GM12878 (cell line): ENCODE measurements at regions of chr7 and their contacts with region 1.

Region 1: GRCh38 chr7:13042612-13043240 is 355.3 kb downstream of the ARL4A start:
- DNase-seq: no peak
- ATAC-seq: no peak
- H3K4me3 ChIP-seq: no peak overlapping the region
- H3K27ac ChIP-seq: no peak overlapping the region
- H3K4me1 ChIP-seq: no peaks in the 10 kb centered on the region
- H3K27me3 ChIP-seq: no peaks in the 10 kb centered on the region
- CTCF ChIP-seq: no peak
- EP300 ChIP-seq: no peak
- POLR2A ChIP-seq: no peak
- RAD21 ChIP-seq: no peak

Region 2: GRCh38 chr7:13257661-13258060 is 214.9 kb after region 1 on chr7:
- CTCF ChIA-PET with region 1: no interaction called
- POLR2A ChIA-PET with region 1: no interaction called
- RAD21 ChIA-PET with region 1: no interaction called
- SMC1A ChIA-PET with region 1: no interaction called
- in situ Hi-C with region 1: no loop called
- intact Hi-C with region 1: loop called (anchors 10 kb)
- DNase-seq: no peak
- ATAC-seq: no peak
- H3K4me3 ChIP-seq: no peak overlapping the region
- H3K27ac ChIP-seq: no peak overlapping the region
- H3K4me1 ChIP-seq: no peaks in the 10 kb centered on the region
- H3K27me3 ChIP-seq: no peaks in the 10 kb centered on the region
- CTCF ChIP-seq: no peak
- EP300 ChIP-seq: no peak
- POLR2A ChIP-seq: no peak
- RAD21 ChIP-seq: no peak